H1 (cell line): ENCODE measurements at regions of chr2 and their contacts with region 1.

Region 1: GRCh38 chr2:21042958-21043743 is 722 bp downstream of the APOB start:
- DNase-seq: peak; percentile 38 to 89
- H3K4me3 ChIP-seq: peak overlapping the region; percentile 40 to 68 (median 52)
- H3K27ac ChIP-seq: no peak overlapping the region
- H3K4me1 ChIP-seq: peaks cover 0 to 10% (median 9%) of the 10 kb centered on the region in 4 experiments
- H3K27me3 ChIP-seq: peaks cover 1 to 12% (median 9%) of the 10 kb centered on the region in 4 experiments; a peak in 6 of 7 replicates
- CTCF ChIP-seq: peak; percentile 88 to 96 (median 90)
- EP300 ChIP-seq: no peak
- POLR2A ChIP-seq: no peak
- RAD21 ChIP-seq: peak; percentile 96 to 100

Region 2: DNA sequence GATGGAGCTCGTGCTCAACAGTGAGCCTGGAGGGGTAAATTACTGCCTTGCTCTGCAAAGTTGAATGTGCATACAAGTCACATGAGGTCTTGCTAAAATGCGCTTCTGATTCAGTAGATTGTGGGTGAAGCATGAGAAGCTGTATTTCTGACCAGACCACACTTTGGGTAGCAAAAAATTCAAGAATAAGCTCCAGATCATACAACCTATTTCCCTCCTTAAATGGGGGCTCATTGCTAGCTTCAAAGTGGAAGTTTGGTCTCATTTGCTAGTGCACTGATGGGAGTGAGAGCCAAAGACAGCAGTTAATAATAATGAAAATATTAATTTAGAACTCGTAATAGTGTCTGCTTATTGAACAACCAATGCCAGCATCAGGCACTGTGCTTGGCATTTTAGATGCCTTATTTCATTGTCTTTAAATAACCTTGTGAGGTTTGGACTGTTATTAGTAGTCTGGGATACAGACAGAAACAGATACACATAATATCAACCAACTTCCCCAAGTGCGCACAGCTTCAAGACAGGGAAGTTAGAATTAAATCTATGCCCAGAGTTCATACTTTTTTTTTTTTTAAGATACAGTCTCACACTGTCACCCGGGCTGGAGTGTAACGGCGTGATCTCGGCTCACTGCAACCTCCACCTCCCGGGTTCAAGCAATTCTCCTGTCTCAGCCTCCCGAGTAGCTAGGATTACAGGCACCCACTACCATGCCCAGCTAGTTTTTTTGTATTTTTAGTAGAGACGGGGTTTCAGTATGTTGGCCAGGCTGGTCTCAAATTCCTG is 17.3 kb before region 1 on chr2:
- CTCF ChIA-PET with region 1: interaction called, 11 read pairs
- POLR2A ChIA-PET with region 1: no interaction called
- DNase-seq: no peak
- H3K4me3 ChIP-seq: no peak overlapping the region
- H3K27ac ChIP-seq: no peak overlapping the region
- H3K4me1 ChIP-seq: no peaks in the 10 kb centered on the region
- H3K27me3 ChIP-seq: no peaks in the 10 kb centered on the region
- CTCF ChIP-seq: no peak
- EP300 ChIP-seq: no peak
- POLR2A ChIP-seq: no peak
- RAD21 ChIP-seq: no peak

Region 3: GRCh38 chr2:21032338-21033236 is 10.6 kb before region 1 on chr2:
- CTCF ChIA-PET with region 1: interaction called, 14 read pairs
- POLR2A ChIA-PET with region 1: no interaction called
- DNase-seq: no peak
- H3K4me3 ChIP-seq: no peak overlapping the region
- H3K27ac ChIP-seq: no peak overlapping the region
- H3K4me1 ChIP-seq: no peaks in the 10 kb centered on the region
- H3K27me3 ChIP-seq: no peaks in the 10 kb centered on the region
- CTCF ChIP-seq: no peak
- EP300 ChIP-seq: no peak
- POLR2A ChIP-seq: no peak
- RAD21 ChIP-seq: no peak